Cardiac septum (tissue), 1 donor: ENCODE measurements at regions of chr16 and their contacts with region 1.

Region 1: GRCh38 chr16:35480361-35480760 is 2020.9 kb downstream of the TP53TG3F start:
- DNase-seq: no peak

Region 2: GRCh38 chr16:35533683-35534082 is 53.3 kb after region 1 on chr16:
- intact Hi-C with region 1: loop called (anchors 10 kb)
- DNase-seq: no peak